A673 (cell line): ENCODE measurements at regions of chr19 and their contacts with region 1.

Region 1: GRCh38 chr19:38142176-38143035 is 81.6 kb downstream of the DPF1 start:
- DNase-seq: peak; percentile 76
- H3K4me3 ChIP-seq: no peak overlapping the region
- H3K27ac ChIP-seq: no peak overlapping the region
- H3K4me1 ChIP-seq: no peaks in the 10 kb centered on the region
- H3K27me3 ChIP-seq: no peaks in the 10 kb centered on the region
- CTCF ChIP-seq: peak; percentile 84

Region 2: DNA sequence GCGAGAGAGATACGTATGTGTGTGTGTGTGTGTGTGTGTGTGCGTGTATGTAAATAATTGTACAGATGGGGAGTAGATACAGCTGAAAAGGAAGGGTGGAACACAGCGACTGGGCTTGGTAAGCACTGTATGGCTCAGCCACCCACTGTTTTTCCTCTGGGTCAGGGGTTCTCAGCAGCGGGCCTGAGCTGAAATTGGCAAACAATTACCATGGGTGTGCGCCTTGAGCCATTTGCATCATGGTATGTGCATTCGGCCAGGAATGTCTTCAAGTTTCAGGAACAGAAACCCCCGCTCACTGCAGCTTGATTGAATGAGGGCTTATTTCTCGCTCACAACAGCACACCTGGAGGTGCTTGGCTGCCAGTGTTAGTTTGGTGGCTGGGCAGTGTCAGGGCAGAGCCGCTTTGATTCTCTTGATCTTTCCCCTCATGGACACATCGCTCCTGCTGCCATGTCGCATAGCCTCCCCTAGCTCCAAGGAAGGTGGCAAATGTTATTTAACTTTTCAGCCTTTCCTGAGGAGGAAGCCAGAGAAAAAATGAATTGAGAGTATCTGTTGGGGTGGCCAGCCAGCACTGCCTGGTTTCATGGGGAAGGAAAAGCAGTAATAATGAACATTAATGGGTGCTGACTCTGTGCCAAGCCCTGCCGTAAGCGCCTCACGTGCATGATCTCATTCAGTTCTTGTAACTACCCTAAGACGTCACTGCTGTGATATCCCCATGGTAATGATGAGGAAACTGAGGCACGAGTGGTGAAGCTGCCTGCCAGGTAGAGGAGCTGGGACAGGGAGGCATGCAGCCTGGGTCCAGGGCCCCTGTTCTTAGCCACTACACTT is 108.5 kb before region 1 on chr19:
- CTCF ChIA-PET with region 1: no interaction called
- POLR2A ChIA-PET with region 1: no interaction called
- intact Hi-C with region 1: no loop called
- DNase-seq: no peak
- H3K4me3 ChIP-seq: no peak overlapping the region
- H3K27ac ChIP-seq: no peak overlapping the region
- H3K4me1 ChIP-seq: no peaks in the 10 kb centered on the region
- H3K27me3 ChIP-seq: no peaks in the 10 kb centered on the region
- CTCF ChIP-seq: no peak

Region 3: GRCh38 chr19:38224014-38224862 is 81.8 kb after region 1 on chr19 and contains the start of gene DPF1:
- CTCF ChIA-PET with region 1: interaction called, 3 read pairs
- POLR2A ChIA-PET with region 1: no interaction called
- intact Hi-C with region 1: loop called (anchors 10 kb)
- DNase-seq: peak; percentile 90
- H3K4me3 ChIP-seq: peak within 1 kb of the TSS; percentile 74
- H3K27ac ChIP-seq: no peak within 1 kb of the TSS
- H3K4me1 ChIP-seq: no peaks in the 10 kb centered on the region
- H3K27me3 ChIP-seq: no peaks in the 10 kb centered on the region
- CTCF ChIP-seq: 0 out of 2 replicates have a peak, but pooled peaks have one; percentile 25
- total RNA-seq, gene DPF1: 6.3 and 8.1 TPM in 2 replicates